GM12878 (cell line): ENCODE measurements at regions of chr1 and their contacts with region 1.

Region 1: GRCh38 chr1:118073648-118074435 is 111.2 kb downstream of the SPAG17 start:
- DNase-seq: no peak
- ATAC-seq: no peak
- H3K4me3 ChIP-seq: no peak overlapping the region
- H3K27ac ChIP-seq: no peak overlapping the region
- H3K4me1 ChIP-seq: no peaks in the 10 kb centered on the region
- H3K27me3 ChIP-seq: no peaks in the 10 kb centered on the region
- CTCF ChIP-seq: no peak
- EP300 ChIP-seq: no peak
- POLR2A ChIP-seq: no peak
- RAD21 ChIP-seq: no peak

Region 2: DNA sequence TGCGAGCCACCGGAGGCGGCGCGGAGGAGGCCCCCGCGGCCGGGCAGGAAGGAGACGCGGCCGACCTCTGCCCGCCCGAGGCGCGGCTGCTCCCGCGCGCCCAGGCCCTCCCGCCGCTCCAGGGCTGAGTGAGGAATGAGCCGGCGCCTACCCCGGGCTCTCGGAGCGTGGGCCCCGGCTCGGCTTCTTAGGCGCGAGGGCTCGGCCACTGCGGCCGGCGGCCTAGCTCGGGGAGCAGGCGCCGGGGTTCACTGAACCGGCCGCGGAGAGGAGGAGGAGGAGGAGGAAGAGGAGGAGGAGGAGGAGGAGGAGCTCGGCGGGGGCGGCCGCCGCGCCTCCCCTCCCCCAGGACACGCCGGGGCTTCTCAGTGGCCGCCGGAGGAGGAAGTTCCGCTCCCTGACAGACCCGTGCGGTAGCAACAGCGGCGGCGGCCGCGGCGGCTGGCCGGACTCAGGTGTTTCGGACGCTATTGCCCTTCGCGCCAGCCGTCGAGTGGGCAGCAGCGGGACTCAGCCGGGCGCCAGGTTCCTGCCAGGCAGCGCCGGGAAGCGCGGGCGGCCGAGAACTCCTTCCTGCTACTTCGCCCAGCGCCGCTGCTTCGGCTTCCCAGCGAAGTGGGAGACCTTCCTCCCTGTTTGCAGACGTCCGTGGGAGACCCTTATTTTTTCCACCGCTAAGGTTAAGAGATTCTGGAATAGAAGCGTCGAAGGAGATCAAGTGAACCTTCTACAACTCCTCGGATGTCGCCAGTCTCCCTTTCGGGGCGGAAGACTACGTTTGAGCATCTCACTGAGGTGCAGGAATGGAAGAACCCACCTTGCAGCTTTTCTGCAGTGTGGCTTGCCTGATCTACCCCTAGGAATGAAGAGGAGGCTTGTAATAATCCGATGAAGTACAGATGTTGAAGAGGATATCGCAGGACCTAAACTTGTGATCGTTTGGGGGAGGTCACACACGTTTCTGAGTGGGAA is 706.5 kb before region 1 on chr1 and contains the start of gene MAN1A2:
- CTCF ChIA-PET with region 1: no interaction called
- POLR2A ChIA-PET with region 1: no interaction called
- RAD21 ChIA-PET with region 1: no interaction called
- SMC1A ChIA-PET with region 1: no interaction called
- in situ Hi-C with region 1: no loop called
- intact Hi-C with region 1: no loop called
- DNase-seq: peak; percentile 53
- ATAC-seq: peak; percentile 77
- H3K4me3 ChIP-seq: peak within 1 kb of the TSS; percentile 96
- H3K27ac ChIP-seq: peak within 1 kb of the TSS; percentile 92
- H3K4me1 ChIP-seq: peaks cover 20% of the 10 kb centered on the region
- H3K27me3 ChIP-seq: no peaks in the 10 kb centered on the region
- CTCF ChIP-seq: no peak
- EP300 ChIP-seq: no peak
- POLR2A ChIP-seq: peak; percentile 79
- RAD21 ChIP-seq: no peak
- polyA plus RNA-seq, gene MAN1A2: 2.8 to 3.2 TPM

Region 3: GRCh38 chr1:118122249-118123004 is 48.6 kb after region 1 on chr1:
- CTCF ChIA-PET with region 1: no interaction called
- POLR2A ChIA-PET with region 1: no interaction called
- RAD21 ChIA-PET with region 1: no interaction called
- SMC1A ChIA-PET with region 1: no interaction called
- in situ Hi-C with region 1: no loop called
- intact Hi-C with region 1: loop called (anchors 10 kb)
- DNase-seq: no peak
- ATAC-seq: no peak
- H3K4me3 ChIP-seq: no peak overlapping the region
- H3K27ac ChIP-seq: no peak overlapping the region
- H3K4me1 ChIP-seq: no peaks in the 10 kb centered on the region
- H3K27me3 ChIP-seq: peaks cover 0 to 1% of the 10 kb centered on the region in 2 experiments; a peak in 2 of 4 replicates
- CTCF ChIP-seq: no peak
- EP300 ChIP-seq: no peak
- POLR2A ChIP-seq: no peak
- RAD21 ChIP-seq: no peak

Region 4: DNA sequence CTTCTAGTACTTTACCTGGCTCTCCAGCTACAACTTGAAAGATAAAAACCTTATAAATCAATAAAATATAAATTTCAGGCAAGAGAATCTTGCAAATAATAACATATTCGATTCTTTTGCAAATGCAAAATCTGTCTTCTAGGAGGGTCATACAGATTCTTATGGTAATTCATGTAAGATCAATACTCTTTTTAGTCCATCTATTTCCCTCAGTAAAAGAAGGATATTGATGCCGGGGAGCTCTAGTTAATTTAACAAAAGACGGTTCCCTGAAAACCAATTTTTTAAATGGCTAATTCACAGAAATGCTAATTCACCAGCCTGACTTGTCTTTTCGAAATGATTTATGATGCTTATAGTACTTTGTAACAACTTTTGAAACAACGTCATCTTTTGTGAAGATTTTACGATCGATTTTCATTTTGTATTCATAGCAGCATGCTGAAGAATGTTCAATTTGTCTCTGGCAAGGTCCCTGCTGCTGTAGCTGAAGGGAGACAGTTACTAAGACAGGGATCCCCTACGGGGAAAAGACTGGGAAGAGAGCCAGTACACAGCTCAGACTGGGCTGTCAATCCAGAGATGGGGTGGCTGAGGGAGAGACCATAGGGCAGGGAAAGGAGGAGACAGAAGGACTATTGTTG is 201.8 kb after region 1 on chr1:
- CTCF ChIA-PET with region 1: no interaction called
- POLR2A ChIA-PET with region 1: no interaction called
- RAD21 ChIA-PET with region 1: no interaction called
- SMC1A ChIA-PET with region 1: no interaction called
- in situ Hi-C with region 1: no loop called
- intact Hi-C with region 1: no loop called
- DNase-seq: no peak
- ATAC-seq: no peak
- H3K4me3 ChIP-seq: no peak overlapping the region
- H3K27ac ChIP-seq: no peak overlapping the region
- H3K4me1 ChIP-seq: no peaks in the 10 kb centered on the region
- H3K27me3 ChIP-seq: no peaks in the 10 kb centered on the region
- CTCF ChIP-seq: no peak
- EP300 ChIP-seq: no peak
- POLR2A ChIP-seq: no peak
- RAD21 ChIP-seq: no peak